Endothelial cell of umbilical vein (primary cell): ENCODE measurements at regions of chr6 and their contacts with region 1.

Region 1: GRCh38 chr6:75208298-75209183 is 2.7 kb upstream of the COL12A1 start:
- DNase-seq: peak; percentile 80
- H3K4me3 ChIP-seq: no peak overlapping the region
- H3K27ac ChIP-seq: no peak overlapping the region
- H3K4me1 ChIP-seq: peaks cover 31% of the 10 kb centered on the region
- H3K27me3 ChIP-seq: peaks cover 17% of the 10 kb centered on the region in 2 experiments
- CTCF ChIP-seq: peak; percentile 78 to 92
- POLR2A ChIP-seq: no peak

Region 2: DNA sequence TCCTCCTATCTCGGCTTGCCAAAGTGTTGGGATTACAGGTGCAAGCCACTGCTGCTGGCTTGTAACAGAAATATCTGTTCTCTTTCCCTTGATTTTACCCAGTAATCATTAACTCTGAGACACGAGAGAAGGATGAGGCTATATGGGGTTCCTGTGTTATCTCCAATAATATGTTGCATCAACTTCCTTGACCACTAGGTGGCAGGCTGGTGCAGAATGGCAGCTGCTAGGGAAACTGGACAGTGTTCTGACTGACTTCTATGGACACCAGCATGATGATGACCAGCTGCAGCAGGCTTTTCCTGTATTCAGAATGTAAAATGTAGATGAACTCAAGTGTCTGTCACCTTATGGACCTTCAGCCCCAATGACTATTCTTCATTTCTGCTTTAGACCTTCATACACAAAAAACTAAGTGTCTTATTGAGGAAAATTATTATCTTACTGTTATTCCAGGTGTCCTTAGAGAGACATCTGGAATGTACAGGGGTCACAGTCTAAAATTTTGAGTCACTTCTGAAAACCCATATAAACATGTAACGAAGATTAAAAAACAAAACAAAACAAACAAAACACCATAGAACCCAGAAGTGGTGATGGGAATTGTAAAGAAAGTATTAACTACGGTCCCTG is 1533.0 kb before region 1 on chr6:
- CTCF ChIA-PET with region 1: interaction called, 8 read pairs
- POLR2A ChIA-PET with region 1: interaction called, 6 read pairs
- dilution Hi-C with region 1: no loop called
- intact Hi-C with region 1: loop called (anchors 5 kb)
- DNase-seq: peak; percentile 85
- H3K4me3 ChIP-seq: no peak overlapping the region
- H3K27ac ChIP-seq: no peak overlapping the region
- H3K4me1 ChIP-seq: peaks cover 3% of the 10 kb centered on the region
- H3K27me3 ChIP-seq: no peaks in the 10 kb centered on the region
- CTCF ChIP-seq: peak; percentile 82 to 84
- POLR2A ChIP-seq: no peak

Region 3: GRCh38 chr6:73854998-73855718 is 1353.4 kb before region 1 on chr6:
- CTCF ChIA-PET with region 1: interaction called, 25 read pairs
- POLR2A ChIA-PET with region 1: no interaction called
- dilution Hi-C with region 1: no loop called
- intact Hi-C with region 1: loop called (anchors 1 kb)
- DNase-seq: peak; percentile 50
- H3K4me3 ChIP-seq: no peak overlapping the region
- H3K27ac ChIP-seq: no peak overlapping the region
- H3K4me1 ChIP-seq: no peaks in the 10 kb centered on the region
- H3K27me3 ChIP-seq: no peaks in the 10 kb centered on the region
- CTCF ChIP-seq: peak; percentile 41 to 46
- POLR2A ChIP-seq: no peak

Region 4: GRCh38 chr6:74343804-74344203 is 864.7 kb before region 1 on chr6:
- CTCF ChIA-PET with region 1: interaction called, 52 read pairs
- POLR2A ChIA-PET with region 1: no interaction called
- dilution Hi-C with region 1: no loop called
- intact Hi-C with region 1: loop called (anchors 1 kb)
- DNase-seq: no peak
- H3K4me3 ChIP-seq: no peak overlapping the region
- H3K27ac ChIP-seq: no peak overlapping the region
- H3K4me1 ChIP-seq: no peaks in the 10 kb centered on the region
- H3K27me3 ChIP-seq: no peaks in the 10 kb centered on the region
- CTCF ChIP-seq: peak in 1 of 2 donors; percentile 23
- POLR2A ChIP-seq: no peak

Region 5: GRCh38 chr6:74598473-74599393 is 609.8 kb before region 1 on chr6:
- CTCF ChIA-PET with region 1: interaction called, 3 read pairs
- POLR2A ChIA-PET with region 1: no interaction called
- dilution Hi-C with region 1: no loop called
- intact Hi-C with region 1: loop called (anchors 5 kb)
- DNase-seq: peak; percentile 15
- H3K4me3 ChIP-seq: no peak overlapping the region
- H3K27ac ChIP-seq: no peak overlapping the region
- H3K4me1 ChIP-seq: peaks cover 16% of the 10 kb centered on the region
- H3K27me3 ChIP-seq: no peaks in the 10 kb centered on the region
- CTCF ChIP-seq: no peak
- POLR2A ChIP-seq: no peak

Region 6: GRCh38 chr6:74971633-74972032 is 236.9 kb before region 1 on chr6:
- CTCF ChIA-PET with region 1: interaction called, 4 read pairs
- POLR2A ChIA-PET with region 1: no interaction called
- dilution Hi-C with region 1: no loop called
- intact Hi-C with region 1: loop called (anchors 10 kb)
- DNase-seq: peak; percentile 5
- H3K4me3 ChIP-seq: no peak overlapping the region
- H3K27ac ChIP-seq: no peak overlapping the region
- H3K4me1 ChIP-seq: peaks cover 18% of the 10 kb centered on the region
- H3K27me3 ChIP-seq: no peaks in the 10 kb centered on the region
- CTCF ChIP-seq: no peak
- POLR2A ChIP-seq: no peak

Region 7: DNA sequence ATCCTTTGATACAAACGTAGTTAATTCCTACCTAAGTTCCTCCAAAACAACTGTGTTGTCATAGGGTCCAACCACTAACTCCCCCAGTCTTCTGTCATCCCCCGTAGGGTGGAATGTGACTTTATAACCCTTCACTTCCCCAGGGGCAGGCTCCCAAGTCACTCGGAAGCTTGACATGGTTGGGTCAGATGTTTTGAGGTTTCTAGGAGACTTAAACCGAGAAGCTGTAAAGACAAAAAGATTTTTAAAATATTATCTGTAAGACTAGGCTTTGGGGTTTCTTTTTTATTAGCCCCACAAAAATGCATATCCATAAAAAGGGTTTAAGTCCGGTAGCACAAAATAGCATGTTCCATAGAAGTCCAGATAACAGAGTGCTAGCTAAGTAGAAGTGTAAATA is 52.9 kb before region 1 on chr6:
- CTCF ChIA-PET with region 1: interaction called, 16 read pairs
- POLR2A ChIA-PET with region 1: no interaction called
- dilution Hi-C with region 1: no loop called
- intact Hi-C with region 1: no loop called
- DNase-seq: peak; percentile 44
- H3K4me3 ChIP-seq: no peak overlapping the region
- H3K27ac ChIP-seq: no peak overlapping the region
- H3K4me1 ChIP-seq: peaks cover 25% of the 10 kb centered on the region
- H3K27me3 ChIP-seq: no peaks in the 10 kb centered on the region
- CTCF ChIP-seq: no peak
- POLR2A ChIP-seq: no peak